Activated naive CD4-positive, alpha-beta T cell treated with anti-CD3 and anti-CD28 coated beads for 36 hours (primary cell): ENCODE measurements at regions of chr4 and their contacts with region 1.

Region 1: DNA sequence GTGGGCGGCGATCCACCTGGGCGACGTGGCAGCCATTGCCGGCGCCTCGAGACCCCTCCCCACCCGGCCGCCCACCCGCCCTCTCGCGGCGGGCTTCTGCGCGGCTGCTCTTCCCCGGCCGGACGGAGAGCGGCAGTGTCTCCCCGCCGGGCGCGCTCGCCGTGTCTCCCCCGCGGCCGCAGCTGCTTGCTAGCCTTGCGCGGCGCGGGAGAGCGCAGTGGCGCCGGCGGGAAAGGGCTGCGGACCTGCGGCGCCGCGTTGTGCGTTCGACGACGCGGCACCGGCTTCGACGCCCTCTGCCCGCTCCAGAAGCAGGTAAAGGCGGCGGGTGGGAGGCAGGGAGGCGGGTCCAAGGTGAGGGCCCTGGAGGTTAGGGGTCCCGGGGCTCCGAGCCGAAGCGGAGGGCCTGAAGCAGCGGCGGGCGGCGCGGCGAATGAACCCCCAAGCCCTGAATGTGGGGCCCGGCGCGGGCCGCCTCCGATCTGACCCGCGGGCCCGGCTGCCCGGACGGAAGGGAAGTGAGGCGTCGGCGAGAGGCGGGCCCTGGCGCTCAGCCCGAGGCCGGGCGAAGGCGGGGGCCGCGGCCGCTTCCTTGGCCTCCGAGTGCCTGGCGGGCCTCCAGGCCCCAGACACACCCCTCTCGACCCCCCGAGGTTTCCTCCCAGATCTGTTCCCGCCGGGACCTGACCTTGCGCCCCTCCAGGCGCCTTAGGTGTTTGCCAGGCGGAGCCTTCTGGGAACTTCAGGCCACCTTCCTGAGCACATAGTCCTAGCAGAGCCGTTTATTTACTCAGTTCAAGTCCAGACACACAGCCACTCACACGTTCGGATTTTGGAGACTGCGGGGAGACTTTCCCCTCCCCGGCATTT is at the start of gene N4BP2:
- DNase-seq: peak; percentile 71
- H3K4me3 Mint-ChIP-seq: peak within 1 kb of the TSS; percentile 93
- H3K27ac Mint-ChIP-seq: peak within 1 kb of the TSS; percentile 95
- H3K4me1 Mint-ChIP-seq: peaks cover 30% of the 10 kb centered on the region
- H3K27me3 Mint-ChIP-seq: no peaks in the 10 kb centered on the region
- total RNA-seq, gene N4BP2: 17.5 to 18.8 TPM

Region 2: DNA sequence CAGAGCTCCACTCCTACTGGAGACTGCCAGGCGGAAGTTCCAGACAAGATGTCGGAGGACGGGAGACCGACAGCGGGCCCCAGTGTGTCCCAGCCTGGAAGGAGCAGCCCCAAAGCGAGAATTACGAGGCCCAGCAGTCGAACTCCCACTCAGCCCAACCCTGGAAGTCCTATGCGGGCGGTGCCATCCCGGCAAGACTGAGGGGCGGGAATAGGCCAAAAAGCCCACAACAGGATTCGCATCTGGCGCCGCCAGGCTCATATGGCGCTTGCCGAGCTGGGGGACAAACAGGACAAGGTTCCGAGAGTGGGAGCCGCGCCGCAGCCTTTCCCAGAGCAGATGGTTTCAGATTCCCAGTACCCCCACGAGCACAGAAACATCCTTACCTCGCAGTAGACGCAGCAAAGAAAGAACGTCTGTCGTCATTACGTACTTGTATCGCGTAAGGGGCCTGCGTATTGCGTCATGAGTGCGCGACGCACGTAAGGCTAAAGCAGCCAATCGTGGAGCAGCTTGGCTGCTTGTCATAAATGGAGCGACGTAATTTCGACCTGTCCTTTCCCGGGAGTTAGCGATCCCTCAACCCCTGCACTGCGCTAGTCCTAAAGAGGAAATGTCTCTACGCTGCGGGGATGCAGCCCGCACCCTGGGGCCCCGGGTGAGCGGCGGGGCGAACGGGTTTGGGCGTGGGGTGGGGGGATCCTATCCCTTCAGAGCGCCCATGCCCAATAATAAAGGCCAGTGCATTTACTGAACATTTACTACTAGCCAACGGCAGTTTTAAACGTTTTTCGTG is 598.2 kb before region 1 on chr4 and contains the starts of genes LIAS and RPL9:
- CTCF ChIA-PET with region 1: no interaction called
- intact Hi-C with region 1: loop called (anchors 1 kb)
- DNase-seq: peak; percentile 95
- H3K4me3 Mint-ChIP-seq: peak within 1 kb of the TSS; percentile 91
- H3K27ac Mint-ChIP-seq: peak within 1 kb of the TSS; percentile 98
- H3K4me1 Mint-ChIP-seq: peaks cover 48% of the 10 kb centered on the region
- H3K27me3 Mint-ChIP-seq: no peaks in the 10 kb centered on the region
- total RNA-seq, gene LIAS: 30.9 to 31.7 TPM
- total RNA-seq, gene RPL9: 2,383 to 2,428 TPM

Region 3: GRCh38 chr4:39977489-39978377 is 79.2 kb before region 1 on chr4 and contains the start of gene PDS5A:
- CTCF ChIA-PET with region 1: interaction called, 11 read pairs
- intact Hi-C with region 1: loop called (anchors 1 kb)
- DNase-seq: peak; percentile 91
- H3K4me3 Mint-ChIP-seq: peak within 1 kb of the TSS; percentile 93
- H3K27ac Mint-ChIP-seq: peak within 1 kb of the TSS; percentile 96
- H3K4me1 Mint-ChIP-seq: peaks cover 33% of the 10 kb centered on the region
- H3K27me3 Mint-ChIP-seq: no peaks in the 10 kb centered on the region
- total RNA-seq, gene PDS5A: 86.8 to 89.1 TPM

Region 4: GRCh38 chr4:40149960-40150385 is 93.0 kb after region 1 on chr4:
- CTCF ChIA-PET with region 1: no interaction called
- intact Hi-C with region 1: loop called (anchors 2 kb)
- DNase-seq: peak; percentile 86
- H3K4me3 Mint-ChIP-seq: no peak overlapping the region
- H3K27ac Mint-ChIP-seq: peak overlapping the region; percentile 70
- H3K4me1 Mint-ChIP-seq: peaks cover 36% of the 10 kb centered on the region
- H3K27me3 Mint-ChIP-seq: no peaks in the 10 kb centered on the region

Region 5: DNA sequence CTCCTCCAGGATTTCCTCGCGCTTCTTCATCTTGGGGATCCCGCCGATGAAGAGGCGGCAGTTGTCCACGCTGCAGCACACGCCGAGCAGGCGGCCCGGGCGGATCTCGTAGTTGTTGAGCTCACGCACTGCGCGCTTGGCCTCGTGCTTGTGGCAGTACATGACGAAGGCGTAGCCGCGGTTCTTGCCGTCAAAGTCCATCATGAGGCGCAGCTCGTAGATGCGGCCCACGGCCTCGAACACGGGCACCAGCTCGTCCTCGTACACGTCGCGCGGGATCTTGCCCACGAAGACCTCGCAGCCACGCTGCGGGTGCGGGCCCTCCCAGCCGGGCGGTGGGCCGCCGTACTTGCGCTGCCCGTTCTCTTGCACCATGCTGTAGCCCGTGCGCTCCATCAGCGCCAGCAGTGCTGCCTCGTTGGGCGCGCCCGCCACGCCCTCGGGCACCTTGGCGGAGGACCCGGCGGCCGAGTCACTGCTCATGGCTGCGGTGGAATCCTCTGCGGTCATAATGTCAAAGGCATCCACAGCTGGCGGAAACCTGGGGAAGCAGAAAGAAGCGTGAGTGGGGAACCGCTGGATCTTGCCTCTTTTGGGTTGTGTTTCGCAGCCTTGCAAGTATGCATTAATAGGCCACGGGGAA is 381.6 kb after region 1 on chr4:
- CTCF ChIA-PET with region 1: no interaction called
- intact Hi-C with region 1: loop called (anchors 5 kb)
- DNase-seq: no peak
- H3K4me3 Mint-ChIP-seq: no peak overlapping the region
- H3K27ac Mint-ChIP-seq: no peak overlapping the region
- H3K4me1 Mint-ChIP-seq: peaks cover 36% of the 10 kb centered on the region
- H3K27me3 Mint-ChIP-seq: no peaks in the 10 kb centered on the region

Region 6: DNA sequence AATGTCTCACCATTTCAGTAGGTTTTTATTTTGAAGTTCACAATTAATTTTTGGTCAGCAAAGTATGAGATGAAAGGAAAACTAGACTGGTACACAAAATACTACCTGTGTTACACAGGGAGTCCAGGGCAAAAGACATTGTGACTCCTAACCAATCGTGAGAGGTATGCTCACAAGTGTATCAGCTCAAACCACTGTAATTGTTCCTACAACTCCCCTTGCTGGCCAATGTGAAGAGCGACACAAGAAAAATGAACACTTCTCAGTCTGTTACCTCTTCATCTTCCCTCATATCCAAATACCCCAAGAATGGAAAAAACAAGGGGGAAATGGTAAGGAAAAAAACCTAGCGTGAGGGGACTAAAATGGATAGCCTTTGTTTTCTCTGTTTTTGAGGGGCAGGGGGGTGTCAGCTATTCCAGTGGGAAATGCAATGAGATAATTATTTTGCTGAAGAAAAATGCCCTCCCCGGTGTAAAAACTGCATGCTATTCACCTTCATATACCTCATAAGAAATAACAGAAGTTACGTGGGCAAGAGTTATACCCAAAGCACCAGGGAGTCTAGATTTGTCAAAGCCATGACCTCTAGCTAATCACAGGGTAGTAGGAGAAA is 662.2 kb after region 1 on chr4:
- CTCF ChIA-PET with region 1: interaction called, 3 read pairs
- intact Hi-C with region 1: loop called (anchors 5 kb)
- DNase-seq: peak; percentile 27
- H3K4me3 Mint-ChIP-seq: no peak overlapping the region
- H3K27ac Mint-ChIP-seq: no peak overlapping the region
- H3K4me1 Mint-ChIP-seq: peaks cover 8% of the 10 kb centered on the region
- H3K27me3 Mint-ChIP-seq: no peaks in the 10 kb centered on the region